Panc1 (cell line): ENCODE measurements at regions of chr2 and their contacts with region 1.

Region 1: DNA sequence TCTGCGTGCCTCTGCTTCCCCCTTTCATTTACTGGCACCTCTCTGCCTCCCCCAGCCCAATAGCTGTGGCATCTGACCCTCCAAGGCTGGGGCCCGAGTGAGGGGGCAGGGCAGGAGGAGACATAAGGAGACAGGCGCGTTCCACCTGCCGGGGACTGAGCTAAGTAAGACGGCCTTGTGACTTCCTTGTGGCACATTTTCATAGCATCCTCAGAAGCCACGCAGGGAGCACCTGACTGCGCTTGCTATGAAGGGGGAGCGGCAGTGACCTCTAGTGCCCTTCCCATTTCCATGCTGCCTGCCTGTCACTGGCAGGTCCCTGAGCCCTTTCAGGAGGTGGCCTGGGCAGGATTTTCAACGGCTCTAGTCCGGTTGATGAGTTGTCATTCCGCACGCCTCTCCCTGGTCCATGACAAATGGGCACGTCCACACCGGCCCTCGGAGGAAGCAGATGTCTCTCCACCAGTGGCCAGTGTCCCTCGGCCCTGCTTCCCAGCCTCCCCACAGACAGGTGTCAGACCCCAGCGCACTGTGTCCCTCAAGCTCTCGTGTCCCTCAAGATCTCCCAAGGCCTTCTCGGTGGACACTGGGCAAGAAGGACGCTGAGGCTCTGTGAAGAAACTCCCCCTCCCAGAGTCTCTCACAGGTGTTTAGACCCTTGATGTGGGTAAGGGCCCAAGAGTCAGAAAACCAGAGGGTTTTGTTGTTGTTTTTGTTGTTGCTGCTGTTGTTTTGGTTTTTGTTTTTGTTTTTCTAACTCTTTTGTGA is 42.7 kb downstream of the CYP26B1 start:
- DNase-seq: no peak
- ATAC-seq: 0 out of 2 replicates have a peak, but pooled peaks have one; percentile 38
- H3K4me3 ChIP-seq: no peak overlapping the region
- H3K27ac ChIP-seq: no peak overlapping the region
- H3K4me1 ChIP-seq: no peaks in the 10 kb centered on the region
- H3K27me3 ChIP-seq: peaks cover 22% of the 10 kb centered on the region; the same call in 1 of the 2 replicates
- CTCF ChIP-seq: no peak

Region 2: DNA sequence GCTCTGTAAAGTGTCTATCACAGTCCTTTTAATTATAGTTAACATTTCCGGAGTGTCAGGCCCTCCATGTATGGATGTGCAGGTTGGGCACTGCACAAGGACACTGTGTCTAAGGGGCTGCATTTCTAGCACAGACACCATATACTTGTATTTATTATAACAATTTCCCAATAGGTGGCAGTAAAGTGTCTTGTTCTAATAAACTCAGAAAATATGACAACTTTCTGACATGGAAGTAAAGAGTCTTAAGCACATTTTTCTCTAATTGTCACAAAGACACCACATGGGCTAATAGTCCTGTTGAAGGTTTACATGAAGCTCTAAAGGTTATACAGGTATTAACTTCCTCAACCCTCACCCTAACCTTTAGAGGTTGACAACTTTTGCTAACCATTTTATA is 495.0 kb before region 1 on chr2:
- CTCF ChIA-PET with region 1: interaction called, 11 read pairs
- POLR2A ChIA-PET with region 1: no interaction called
- in situ Hi-C with region 1: no loop called
- intact Hi-C with region 1: no loop called
- DNase-seq: peak; percentile 27
- ATAC-seq: peak; percentile 78
- H3K4me3 ChIP-seq: no peak overlapping the region
- H3K27ac ChIP-seq: no peak overlapping the region
- H3K4me1 ChIP-seq: no peaks in the 10 kb centered on the region
- H3K27me3 ChIP-seq: peaks cover 2% of the 10 kb centered on the region; the same call in 1 of the 2 replicates
- CTCF ChIP-seq: no peak

Region 3: GRCh38 chr2:71778936-71779773 is 325.9 kb before region 1 on chr2:
- CTCF ChIA-PET with region 1: no interaction called
- POLR2A ChIA-PET with region 1: no interaction called
- in situ Hi-C with region 1: no loop called
- intact Hi-C with region 1: no loop called
- DNase-seq: no peak
- ATAC-seq: peak; percentile 72; the same call in 1 of the 2 replicates
- H3K4me3 ChIP-seq: no peak overlapping the region
- H3K27ac ChIP-seq: no peak overlapping the region
- H3K4me1 ChIP-seq: 0 out of 2 replicates have a peak, but pooled peaks cover 3% of the 10 kb centered on the region
- H3K27me3 ChIP-seq: no peaks in the 10 kb centered on the region
- CTCF ChIP-seq: no peak

Region 4: DNA sequence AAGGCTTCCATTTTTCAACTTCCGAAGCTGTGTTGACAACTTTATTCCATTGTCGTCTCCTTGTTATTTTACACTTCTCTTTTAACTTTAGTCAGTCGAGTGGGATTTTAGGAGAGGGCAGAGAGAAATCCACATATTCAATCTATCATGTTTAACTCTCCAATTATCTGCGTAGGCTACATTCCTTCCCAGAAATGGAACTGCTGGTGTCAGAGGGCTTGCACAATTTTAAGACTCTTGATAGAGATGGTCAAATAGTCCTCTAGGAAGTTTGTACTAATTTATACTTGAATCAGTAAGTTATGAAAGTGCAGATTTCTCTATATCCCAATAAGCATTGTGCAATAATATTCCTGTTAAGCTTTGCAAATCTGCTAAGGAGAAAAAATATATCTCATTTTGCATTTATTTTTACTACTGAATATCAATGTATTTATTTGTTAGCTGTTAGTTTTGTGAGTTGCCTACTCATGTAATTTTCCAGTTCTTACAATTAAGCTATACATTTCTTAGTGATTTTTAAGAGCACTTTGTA is 53.0 kb before region 1 on chr2:
- CTCF ChIA-PET with region 1: no interaction called
- POLR2A ChIA-PET with region 1: interaction called, 10 read pairs
- in situ Hi-C with region 1: no loop called
- intact Hi-C with region 1: no loop called
- DNase-seq: no peak
- ATAC-seq: no peak
- H3K4me3 ChIP-seq: no peak overlapping the region
- H3K27ac ChIP-seq: no peak overlapping the region
- H3K4me1 ChIP-seq: no peaks in the 10 kb centered on the region
- H3K27me3 ChIP-seq: 0 out of 2 replicates have a peak, but pooled peaks cover 2% of the 10 kb centered on the region
- CTCF ChIP-seq: no peak